ENCODE measurements at regions of chr17 and their contacts with region 1.

Region 1: GRCh38 chr17:61689610-61690180 is 98.7 kb upstream of the NACA2 start:
- DNase-seq: no peak
- ATAC-seq: no peak
- H3K4me3 ChIP-seq: no peak overlapping the region
- H3K27ac ChIP-seq: no peak overlapping the region
- H3K4me1 ChIP-seq: no peaks in the 10 kb centered on the region
- H3K27me3 ChIP-seq: no peaks in the 10 kb centered on the region
- CTCF ChIP-seq: no peak
- EP300 ChIP-seq: no peak
- POLR2A ChIP-seq: no peak
- RAD21 ChIP-seq: no peak

Region 2: GRCh38 chr17:61495145-61495857 is 194.4 kb before region 1 on chr17:
- CTCF ChIA-PET with region 1: no interaction called
- POLR2A ChIA-PET with region 1: no interaction called
- in situ Hi-C with region 1: no loop called
- intact Hi-C with region 1: loop called (anchors 10 kb)
- DNase-seq: no peak
- ATAC-seq: no peak
- H3K4me3 ChIP-seq: no peak overlapping the region
- H3K27ac ChIP-seq: no peak overlapping the region
- H3K4me1 ChIP-seq: peaks cover 76% of the 10 kb centered on the region
- H3K27me3 ChIP-seq: no peaks in the 10 kb centered on the region
- CTCF ChIP-seq: no peak
- EP300 ChIP-seq: no peak
- POLR2A ChIP-seq: no peak
- RAD21 ChIP-seq: no peak

Region 3: DNA sequence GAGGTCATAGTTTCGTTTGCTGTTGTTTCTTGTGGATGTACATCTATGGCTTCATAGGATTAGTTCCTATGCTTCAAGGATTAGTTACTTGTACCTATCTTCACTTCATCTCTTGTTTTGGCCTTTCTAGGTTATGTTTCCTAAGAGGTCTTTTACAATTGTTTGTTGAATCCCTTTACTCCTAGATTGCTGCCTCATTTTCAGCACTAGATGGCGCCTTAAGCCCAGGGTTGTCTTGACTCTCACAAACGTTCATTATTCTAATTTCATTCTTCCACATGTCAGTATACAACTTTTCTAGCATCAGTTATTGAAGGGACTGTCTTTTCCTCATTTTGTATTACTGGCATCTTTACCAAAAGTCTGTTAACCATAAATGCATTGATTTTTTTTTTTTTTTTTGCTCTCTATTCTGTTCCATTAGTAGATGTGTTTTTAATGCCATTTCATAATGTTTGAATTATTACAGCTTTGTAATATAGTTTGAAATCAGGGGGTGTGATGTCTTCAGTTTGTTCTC is 53.7 kb before region 1 on chr17:
- CTCF ChIA-PET with region 1: no interaction called
- POLR2A ChIA-PET with region 1: no interaction called
- in situ Hi-C with region 1: no loop called
- intact Hi-C with region 1: loop called (anchors 2 kb)
- DNase-seq: peak; percentile 62
- ATAC-seq: peak; percentile 58
- H3K4me3 ChIP-seq: no peak overlapping the region
- H3K27ac ChIP-seq: no peak overlapping the region
- H3K4me1 ChIP-seq: no peaks in the 10 kb centered on the region
- H3K27me3 ChIP-seq: no peaks in the 10 kb centered on the region
- CTCF ChIP-seq: peak; percentile 91
- EP300 ChIP-seq: no peak
- POLR2A ChIP-seq: no peak
- RAD21 ChIP-seq: peak; percentile 83

Region 4: GRCh38 chr17:61700252-61700651 is 10.6 kb after region 1 on chr17:
- CTCF ChIA-PET with region 1: no interaction called
- POLR2A ChIA-PET with region 1: no interaction called
- in situ Hi-C with region 1: no loop called
- intact Hi-C with region 1: no loop called
- DNase-seq: no peak
- ATAC-seq: no peak
- H3K4me3 ChIP-seq: no peak overlapping the region
- H3K27ac ChIP-seq: no peak overlapping the region
- H3K4me1 ChIP-seq: no peaks in the 10 kb centered on the region
- H3K27me3 ChIP-seq: no peaks in the 10 kb centered on the region
- CTCF ChIP-seq: no peak
- EP300 ChIP-seq: no peak
- POLR2A ChIP-seq: no peak
- RAD21 ChIP-seq: no peak